A673 (cell line): ENCODE measurements at regions of chr9 and their contacts with region 1.

Region 1: DNA sequence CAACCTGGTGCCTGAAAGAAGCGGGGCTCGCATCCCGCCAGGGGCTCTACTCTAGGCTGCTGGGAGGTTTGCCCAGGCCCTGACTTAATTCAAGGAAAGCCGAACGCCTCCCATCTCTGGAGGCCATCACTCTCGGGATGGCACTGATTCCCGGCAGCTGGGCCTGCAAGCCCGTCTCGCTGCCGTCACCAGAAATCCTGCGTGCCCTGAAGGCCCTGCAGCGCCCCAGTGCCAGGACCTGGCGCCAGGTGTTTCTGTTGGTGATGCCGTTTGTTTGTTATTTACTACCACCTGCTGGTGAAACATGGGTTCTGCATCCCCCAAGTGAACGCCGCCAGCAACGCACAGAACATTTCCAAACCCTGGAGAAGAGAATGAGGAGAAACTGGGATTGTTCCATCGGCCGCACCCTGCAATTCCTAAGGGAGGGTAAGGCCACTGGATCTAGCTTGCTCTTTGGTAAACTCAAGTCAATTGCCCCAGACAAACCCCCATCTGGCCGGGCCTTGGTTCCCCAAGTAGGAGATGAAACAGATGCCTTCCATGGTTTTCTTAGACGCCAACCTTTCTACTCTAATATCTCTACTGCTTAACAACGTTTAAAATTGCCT is 77.9 kb downstream of the AK8 start:
- DNase-seq: peak; percentile 81
- H3K4me3 ChIP-seq: no peak overlapping the region
- H3K27ac ChIP-seq: no peak overlapping the region
- H3K4me1 ChIP-seq: peaks cover 3% of the 10 kb centered on the region
- H3K27me3 ChIP-seq: peaks cover 8% of the 10 kb centered on the region
- CTCF ChIP-seq: peak; percentile 87

Region 2: GRCh38 chr9:132411091-132411508 is 389.0 kb before region 1 on chr9:
- CTCF ChIA-PET with region 1: no interaction called
- POLR2A ChIA-PET with region 1: no interaction called
- intact Hi-C with region 1: loop called (anchors 5 kb)
- DNase-seq: peak; percentile 34
- H3K4me3 ChIP-seq: no peak overlapping the region
- H3K27ac ChIP-seq: no peak overlapping the region
- H3K4me1 ChIP-seq: no peaks in the 10 kb centered on the region
- H3K27me3 ChIP-seq: peaks cover 69% of the 10 kb centered on the region
- CTCF ChIP-seq: peak; percentile 75

Region 3: GRCh38 chr9:132507746-132508469 is 292.2 kb before region 1 on chr9:
- CTCF ChIA-PET with region 1: no interaction called
- POLR2A ChIA-PET with region 1: no interaction called
- intact Hi-C with region 1: loop called (anchors 2 kb)
- DNase-seq: peak; percentile 77
- H3K4me3 ChIP-seq: no peak overlapping the region
- H3K27ac ChIP-seq: no peak overlapping the region
- H3K4me1 ChIP-seq: no peaks in the 10 kb centered on the region
- H3K27me3 ChIP-seq: peaks cover 36% of the 10 kb centered on the region
- CTCF ChIP-seq: peak; percentile 86

Region 4: GRCh38 chr9:132575005-132575609 is 225.0 kb before region 1 on chr9:
- CTCF ChIA-PET with region 1: no interaction called
- POLR2A ChIA-PET with region 1: no interaction called
- intact Hi-C with region 1: loop called (anchors 10 kb)
- DNase-seq: peak; percentile 85
- H3K4me3 ChIP-seq: no peak overlapping the region
- H3K27ac ChIP-seq: no peak overlapping the region
- H3K4me1 ChIP-seq: no peaks in the 10 kb centered on the region
- H3K27me3 ChIP-seq: peaks cover 82% of the 10 kb centered on the region
- CTCF ChIP-seq: peak; percentile 77

Region 5: DNA sequence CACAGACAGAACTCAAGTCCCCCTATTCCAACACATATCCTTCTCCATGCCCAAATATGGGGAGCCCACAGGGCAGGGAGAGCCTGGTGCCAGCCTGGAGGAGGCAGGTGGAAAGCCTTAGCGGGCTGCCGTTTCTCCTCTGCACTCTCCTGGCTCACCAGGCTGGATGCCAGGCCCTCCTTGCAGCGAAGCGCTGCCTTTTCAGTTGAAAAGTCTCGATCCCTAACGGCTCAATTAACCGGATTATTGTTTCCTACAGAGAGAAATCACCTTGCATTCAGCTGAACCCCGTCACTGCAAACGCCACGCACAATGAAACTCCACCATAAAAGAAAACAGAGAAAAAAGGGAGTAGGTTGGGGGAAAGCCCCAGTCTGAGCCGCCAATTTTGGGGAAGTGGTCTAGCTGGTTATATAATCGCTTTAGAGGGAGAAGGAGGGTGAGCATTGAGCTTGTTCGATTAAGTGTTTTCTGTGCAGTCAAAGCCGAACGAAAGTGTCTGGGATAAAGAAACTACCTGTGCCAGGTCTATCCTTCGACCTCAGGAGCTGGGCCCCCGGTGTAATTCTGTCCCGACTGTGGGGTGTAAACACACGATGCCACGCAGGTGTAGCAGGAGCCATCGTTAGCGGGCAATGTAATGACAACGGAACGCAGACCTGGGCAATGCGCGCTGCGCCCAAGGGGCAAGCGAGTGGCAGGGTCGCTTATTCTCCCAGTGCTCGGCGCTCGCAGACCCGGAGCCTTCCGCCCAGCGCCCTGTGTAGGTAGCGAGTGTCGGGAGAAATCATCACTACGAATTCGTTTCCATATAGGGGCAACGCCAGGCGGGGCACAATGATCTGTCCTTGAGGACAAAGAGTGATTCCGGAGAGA is 214.0 kb before region 1 on chr9:
- CTCF ChIA-PET with region 1: interaction called, 10 read pairs
- POLR2A ChIA-PET with region 1: no interaction called
- intact Hi-C with region 1: no loop called
- DNase-seq: no peak
- H3K4me3 ChIP-seq: no peak overlapping the region
- H3K27ac ChIP-seq: no peak overlapping the region
- H3K4me1 ChIP-seq: peaks cover 4% of the 10 kb centered on the region
- H3K27me3 ChIP-seq: peaks cover 100% of the 10 kb centered on the region
- CTCF ChIP-seq: no peak

Region 6: DNA sequence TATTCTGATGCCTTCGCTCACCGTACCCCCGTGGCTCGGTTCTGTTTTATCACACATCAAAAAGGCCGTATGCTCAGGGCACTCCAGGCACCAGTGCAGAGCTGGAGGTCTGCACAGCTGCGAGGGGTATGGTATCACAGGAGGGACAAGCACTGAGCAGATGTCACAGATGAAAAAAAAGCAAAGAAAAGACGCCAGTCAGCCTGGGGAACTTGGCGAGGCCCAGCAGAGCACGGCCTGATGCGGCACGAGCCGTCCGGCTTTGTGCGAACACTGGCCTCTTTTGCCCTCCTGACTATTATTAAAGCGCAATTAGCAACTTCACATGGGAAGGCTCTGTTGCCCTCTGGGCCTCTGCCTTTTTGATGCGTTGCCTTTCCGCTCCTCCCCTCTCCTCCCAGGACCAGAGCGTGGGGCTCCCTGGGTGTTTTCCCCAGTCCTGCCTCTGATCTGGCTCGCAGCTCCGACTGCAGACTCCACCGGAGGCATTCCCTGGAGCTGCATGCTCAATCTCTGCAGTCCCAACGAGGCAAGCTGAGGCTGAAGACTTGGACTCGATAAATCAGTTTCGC is 33.5 kb after region 1 on chr9:
- CTCF ChIA-PET with region 1: no interaction called
- POLR2A ChIA-PET with region 1: no interaction called
- intact Hi-C with region 1: no loop called
- DNase-seq: no peak
- H3K4me3 ChIP-seq: no peak overlapping the region
- H3K27ac ChIP-seq: no peak overlapping the region
- H3K4me1 ChIP-seq: no peaks in the 10 kb centered on the region
- H3K27me3 ChIP-seq: peaks cover 18% of the 10 kb centered on the region
- CTCF ChIP-seq: no peak

Region 7: GRCh38 chr9:132973713-132974112 is 173.6 kb after region 1 on chr9:
- CTCF ChIA-PET with region 1: no interaction called
- POLR2A ChIA-PET with region 1: no interaction called
- intact Hi-C with region 1: loop called (anchors 10 kb)
- DNase-seq: peak; percentile 60
- H3K4me3 ChIP-seq: no peak overlapping the region
- H3K27ac ChIP-seq: no peak overlapping the region
- H3K4me1 ChIP-seq: no peaks in the 10 kb centered on the region
- H3K27me3 ChIP-seq: peaks cover 49% of the 10 kb centered on the region
- CTCF ChIP-seq: no peak

Region 8: GRCh38 chr9:134067904-134068743 is 1268.0 kb after region 1 on chr9 and contains the start of gene BRD3:
- CTCF ChIA-PET with region 1: no interaction called
- POLR2A ChIA-PET with region 1: no interaction called
- intact Hi-C with region 1: no loop called
- DNase-seq: peak; percentile 97
- H3K4me3 ChIP-seq: peak within 1 kb of the TSS; percentile 99
- H3K27ac ChIP-seq: peak within 1 kb of the TSS; percentile 94
- H3K4me1 ChIP-seq: no peaks in the 10 kb centered on the region
- H3K27me3 ChIP-seq: peaks cover 15% of the 10 kb centered on the region
- CTCF ChIP-seq: no peak
- total RNA-seq, gene BRD3: 61.6 and 72.7 TPM in 2 replicates